Right lobe of liver (tissue), 6 donors: ENCODE measurements at regions of chr22 and their contacts with region 1.

Region 1: GRCh38 chr22:23178512-23179254 is 1.6 kb upstream of the BCR start:
- DNase-seq: peak; percentile 72 to 75 (median 73)
- ATAC-seq: peak; percentile 57 to 68 (median 62)
- H3K4me3 ChIP-seq: no peak overlapping the region
- H3K27ac ChIP-seq: peak overlapping the region; percentile 30 to 76 (median 41)
- H3K4me1 ChIP-seq: peaks cover 0 to 40% (median 13%) of the 10 kb centered on the region in 4 donors
- H3K27me3 ChIP-seq: no peaks in the 10 kb centered on the region
- CTCF ChIP-seq: peak; percentile 93 to 97 (median 96)
- POLR2A ChIP-seq: no peak

Region 2: GRCh38 chr22:23137905-23138561 is 40.6 kb before region 1 on chr22:
- intact Hi-C with region 1: no loop called
- DNase-seq: peak in 1 of 3 donors; percentile 38
- ATAC-seq: peak in 1 of 4 donors; percentile 10
- H3K4me3 ChIP-seq: no peak overlapping the region
- H3K27ac ChIP-seq: no peak overlapping the region
- H3K4me1 ChIP-seq: peaks cover 0 to 7% (median 5%) of the 10 kb centered on the region in 4 donors
- H3K27me3 ChIP-seq: no peaks in the 10 kb centered on the region
- CTCF ChIP-seq: no peak
- POLR2A ChIP-seq: no peak

Region 3: GRCh38 chr22:23281406-23282088 is 102.9 kb after region 1 on chr22:
- intact Hi-C with region 1: loop called (anchors 2 to 5 kb)
- DNase-seq: peak; percentile 76 to 84 (median 84)
- ATAC-seq: peak; percentile 81 to 87 (median 84)
- H3K4me3 ChIP-seq: no peak overlapping the region
- H3K27ac ChIP-seq: peak overlapping the region in 1 of 3 donors; percentile 9
- H3K4me1 ChIP-seq: peaks cover 0 to 19% (median 3%) of the 10 kb centered on the region in 4 donors
- H3K27me3 ChIP-seq: no peaks in the 10 kb centered on the region
- CTCF ChIP-seq: peak; percentile 84 to 94 (median 92)
- POLR2A ChIP-seq: no peak

Region 4: GRCh38 chr22:23315341-23315917 is 136.7 kb after region 1 on chr22:
- intact Hi-C with region 1: no loop called
- DNase-seq: peak in 2 of 3 donors; percentile 69 to 71
- ATAC-seq: peak; percentile 40 to 60 (median 56)
- H3K4me3 ChIP-seq: no peak overlapping the region
- H3K27ac ChIP-seq: no peak overlapping the region
- H3K4me1 ChIP-seq: no peaks in the 10 kb centered on the region
- H3K27me3 ChIP-seq: no peaks in the 10 kb centered on the region
- CTCF ChIP-seq: peak; percentile 20 to 79 (median 74)
- POLR2A ChIP-seq: no peak